Activated B cell treated with CpG ODN at 0.5 μM for 24 hours (primary cell): ENCODE measurements at regions of chr12 and their contacts with region 1.

Region 1: DNA sequence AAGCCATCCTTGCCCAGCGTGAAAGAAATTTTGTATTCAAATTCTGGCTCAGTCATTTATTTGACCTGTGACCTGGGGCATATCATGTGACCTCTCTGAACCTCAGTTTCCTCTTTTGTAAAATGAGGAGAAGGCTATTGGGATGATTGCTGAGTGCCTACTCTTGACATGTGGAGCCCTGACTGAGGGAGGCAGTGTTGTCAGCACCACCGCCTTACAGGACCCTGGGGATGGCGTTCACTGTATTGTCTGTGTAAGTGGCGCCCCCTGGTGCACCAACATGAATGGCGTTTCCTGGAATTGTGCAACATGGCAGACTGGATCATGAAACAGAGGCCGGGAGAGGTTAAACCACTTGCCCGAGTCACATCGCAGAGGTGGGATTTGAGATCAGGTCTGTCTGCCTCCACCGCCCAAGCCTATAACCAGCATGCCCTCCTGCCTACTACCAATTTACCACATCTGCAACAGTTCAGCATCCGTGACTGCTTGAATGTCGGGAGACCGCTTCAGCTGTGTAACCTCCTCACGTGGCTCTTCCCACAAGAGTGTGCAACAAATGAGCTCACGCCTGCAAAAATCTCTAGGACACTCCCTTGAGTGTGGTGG is 20.1 kb upstream of the CCDC63 start:
- DNase-seq: peak; percentile 74
- ATAC-seq: peak; percentile 99
- H3K4me3 Mint-ChIP-seq: peak overlapping the region; percentile 80
- H3K27ac Mint-ChIP-seq: peak overlapping the region; percentile 41
- H3K4me1 Mint-ChIP-seq: peaks cover 6% of the 10 kb centered on the region
- H3K27me3 Mint-ChIP-seq: peaks cover 4% of the 10 kb centered on the region
- CTCF ChIP-seq: no peak

Region 2: DNA sequence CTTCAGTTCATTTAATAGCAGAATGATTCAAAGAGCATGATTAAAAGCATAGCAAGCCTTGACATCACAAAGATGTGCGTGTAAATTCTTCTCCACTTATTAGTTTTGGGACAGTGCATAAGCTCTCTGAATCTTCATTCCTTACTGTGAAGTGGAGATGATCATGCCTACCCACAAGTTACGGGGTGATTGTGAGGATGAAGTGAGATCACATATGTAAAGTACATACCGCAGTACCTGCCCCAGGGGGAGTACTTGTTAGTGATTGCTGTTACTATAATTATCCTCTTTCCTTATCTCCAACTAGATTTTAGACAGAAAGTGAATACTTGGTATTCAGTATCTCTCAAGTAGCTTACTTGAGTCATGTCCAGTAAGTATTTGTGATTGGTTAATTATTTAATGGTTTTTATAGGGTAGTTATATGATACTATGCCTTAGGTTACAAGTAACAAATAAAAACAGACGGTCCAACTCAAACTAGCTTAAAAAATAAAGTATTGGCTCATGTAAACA is 318.6 kb before region 1 on chr12:
- CTCF ChIA-PET with region 1: interaction called, 10 read pairs
- POLR2A ChIA-PET with region 1: no interaction called
- intact Hi-C with region 1: loop called (anchors 1 kb)
- DNase-seq: no peak
- ATAC-seq: no peak
- H3K4me3 Mint-ChIP-seq: no peak overlapping the region
- H3K27ac Mint-ChIP-seq: no peak overlapping the region
- H3K4me1 Mint-ChIP-seq: peaks cover 2% of the 10 kb centered on the region
- H3K27me3 Mint-ChIP-seq: no peaks in the 10 kb centered on the region
- CTCF ChIP-seq: no peak

Region 3: DNA sequence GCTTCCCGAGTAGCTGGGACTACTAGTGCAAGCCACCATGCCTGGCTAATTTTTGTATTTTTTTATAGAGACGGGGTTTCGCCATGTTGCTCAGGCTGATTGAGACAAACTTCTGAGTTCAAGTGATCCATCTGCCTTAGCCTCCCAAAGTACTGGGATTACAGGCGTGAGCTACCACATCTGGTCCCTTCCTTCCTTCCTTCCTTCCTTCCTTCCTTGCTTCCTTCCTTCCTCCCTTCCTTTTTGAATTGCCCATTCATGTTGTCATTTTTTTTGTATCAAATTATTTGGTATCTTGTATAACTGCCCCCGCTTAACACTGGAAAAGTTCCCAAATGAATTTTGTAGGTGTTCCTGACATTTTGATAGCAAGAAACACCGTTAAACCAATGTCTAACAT is 312.9 kb before region 1 on chr12:
- CTCF ChIA-PET with region 1: interaction called, 10 read pairs
- POLR2A ChIA-PET with region 1: no interaction called
- intact Hi-C with region 1: loop called (anchors 1 kb)
- DNase-seq: no peak
- ATAC-seq: no peak
- H3K4me3 Mint-ChIP-seq: no peak overlapping the region
- H3K27ac Mint-ChIP-seq: no peak overlapping the region
- H3K4me1 Mint-ChIP-seq: no peaks in the 10 kb centered on the region
- H3K27me3 Mint-ChIP-seq: no peaks in the 10 kb centered on the region
- CTCF ChIP-seq: no peak

Region 4: GRCh38 chr12:110555577-110556406 is 270.9 kb before region 1 on chr12:
- CTCF ChIA-PET with region 1: interaction called, 6 read pairs
- POLR2A ChIA-PET with region 1: no interaction called
- intact Hi-C with region 1: loop called (anchors 1 kb)
- DNase-seq: no peak
- ATAC-seq: no peak
- H3K4me3 Mint-ChIP-seq: no peak overlapping the region
- H3K27ac Mint-ChIP-seq: no peak overlapping the region
- H3K4me1 Mint-ChIP-seq: peaks cover 63% of the 10 kb centered on the region
- H3K27me3 Mint-ChIP-seq: no peaks in the 10 kb centered on the region
- CTCF ChIP-seq: no peak

Region 5: GRCh38 chr12:110698171-110698902 is 128.4 kb before region 1 on chr12:
- CTCF ChIA-PET with region 1: no interaction called
- POLR2A ChIA-PET with region 1: no interaction called
- intact Hi-C with region 1: loop called (anchors 1 kb)
- DNase-seq: peak; percentile 60
- ATAC-seq: peak; percentile 100
- H3K4me3 Mint-ChIP-seq: peak overlapping the region; percentile 61
- H3K27ac Mint-ChIP-seq: peak overlapping the region; percentile 91
- H3K4me1 Mint-ChIP-seq: peaks cover 38% of the 10 kb centered on the region
- H3K27me3 Mint-ChIP-seq: no peaks in the 10 kb centered on the region
- CTCF ChIP-seq: peak; percentile 17

Region 6: DNA sequence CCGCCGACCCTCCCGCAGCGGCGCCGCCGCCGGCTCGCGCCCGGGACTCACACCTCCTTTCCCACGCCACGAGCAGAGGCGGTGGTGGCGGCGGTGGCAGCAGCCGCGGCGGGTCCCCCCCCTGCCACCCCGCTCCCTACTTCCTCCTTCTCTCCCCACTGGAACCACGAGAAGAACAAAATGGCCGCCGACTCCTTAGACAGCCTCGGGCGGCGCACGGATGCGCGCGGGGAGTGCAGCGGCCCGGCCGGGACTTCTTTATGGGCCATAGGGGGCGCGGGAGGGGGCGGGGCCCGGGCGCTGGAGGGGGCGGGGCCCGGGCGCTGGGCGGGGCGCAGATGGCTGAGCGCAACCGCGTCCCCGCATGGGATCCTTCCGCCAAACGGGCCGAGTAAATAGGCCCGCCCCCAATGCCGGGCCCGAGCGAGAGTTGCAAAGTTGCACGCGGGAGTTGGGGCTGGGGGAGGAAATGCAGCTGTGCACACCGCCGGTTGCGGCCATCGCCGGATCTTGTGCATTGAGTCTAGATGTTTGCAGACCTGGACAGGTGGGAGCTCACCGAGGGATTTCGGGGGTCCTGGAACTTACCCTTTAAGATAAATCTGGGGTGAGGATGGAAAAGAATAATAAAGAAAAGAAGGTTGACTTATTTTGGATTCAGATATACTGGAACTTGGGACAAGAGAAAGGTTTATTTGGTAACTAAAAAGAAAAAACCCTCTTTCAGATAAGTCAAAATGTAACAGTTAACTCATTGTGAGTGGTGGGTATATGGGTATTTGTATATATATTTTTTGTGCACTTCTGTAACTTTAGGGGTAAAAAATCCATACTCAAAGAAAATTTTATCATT is 83.8 kb before region 1 on chr12 and contains the start of gene PPP1CC:
- CTCF ChIA-PET with region 1: interaction called, 3 read pairs
- POLR2A ChIA-PET with region 1: no interaction called
- intact Hi-C with region 1: loop called (anchors 2 kb)
- DNase-seq: peak; percentile 82
- ATAC-seq: peak; percentile 94
- H3K4me3 Mint-ChIP-seq: peak within 1 kb of the TSS; percentile 98
- H3K27ac Mint-ChIP-seq: peak within 1 kb of the TSS; percentile 93
- H3K4me1 Mint-ChIP-seq: peaks cover 44% of the 10 kb centered on the region
- H3K27me3 Mint-ChIP-seq: no peaks in the 10 kb centered on the region
- CTCF ChIP-seq: no peak
- total RNA-seq, gene PPP1CC: 148 and 152 TPM in 2 replicates

Region 7: GRCh38 chr12:110888256-110888991 is 61.7 kb after region 1 on chr12:
- CTCF ChIA-PET with region 1: no interaction called
- POLR2A ChIA-PET with region 1: no interaction called
- intact Hi-C with region 1: loop called (anchors 1 kb)
- DNase-seq: no peak
- ATAC-seq: no peak
- H3K4me3 Mint-ChIP-seq: peak overlapping the region; percentile 92
- H3K27ac Mint-ChIP-seq: peak overlapping the region; percentile 84
- H3K4me1 Mint-ChIP-seq: peaks cover 4% of the 10 kb centered on the region
- H3K27me3 Mint-ChIP-seq: no peaks in the 10 kb centered on the region
- CTCF ChIP-seq: no peak